CD8-positive, alpha-beta T cell (primary cell): ENCODE measurements at regions of chr3 and their contacts with region 1.

Region 1: DNA sequence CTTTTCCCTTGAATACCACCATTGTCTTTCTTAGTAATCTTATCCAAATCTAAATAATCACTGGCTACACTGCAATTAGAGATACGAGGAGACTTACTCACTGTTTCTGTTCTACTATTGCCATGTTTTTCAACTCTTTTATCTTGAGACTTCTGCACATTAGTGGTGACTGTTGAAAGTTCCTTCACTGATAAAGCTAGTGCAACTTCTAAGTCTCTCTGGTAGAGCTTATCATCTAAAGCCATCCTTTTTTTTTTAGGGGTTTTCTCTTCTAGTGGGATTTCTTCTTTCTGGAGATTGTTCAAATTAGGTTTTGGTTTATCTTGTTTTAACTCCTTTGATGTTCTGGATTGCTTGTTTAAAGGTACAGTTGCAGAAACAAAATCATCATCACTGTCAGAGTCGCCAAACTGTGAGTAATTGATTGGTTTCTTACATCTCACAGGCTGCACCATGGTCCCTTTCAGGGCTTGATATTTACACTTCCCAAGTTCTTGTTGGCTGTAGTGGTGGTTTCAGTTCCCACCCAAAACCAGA is 37.7 kb downstream of the NCK1 start:
- DNase-seq: peak in 2 of 9 experiments; percentile 18 to 53
- ATAC-seq: peak; percentile 31
- H3K4me3 ChIP-seq: no peak overlapping the region
- H3K4me3 Mint-ChIP-seq: peak overlapping the region; percentile 21
- H3K27ac ChIP-seq: peak overlapping the region in 1 of 2 experiments; percentile 48
- H3K27ac Mint-ChIP-seq: peak overlapping the region; percentile 78
- H3K4me1 ChIP-seq: peaks cover 19% of the 10 kb centered on the region
- H3K4me1 Mint-ChIP-seq: peaks cover 66% of the 10 kb centered on the region
- H3K27me3 ChIP-seq: no peaks in the 10 kb centered on the region
- H3K27me3 Mint-ChIP-seq: no peaks in the 10 kb centered on the region
- CTCF ChIP-seq: no peak

Region 2: GRCh38 chr3:136838641-136839555 is 60.8 kb before region 1 on chr3:
- CTCF ChIA-PET with region 1: no interaction called
- POLR2A ChIA-PET with region 1: no interaction called
- intact Hi-C with region 1: no loop called
- DNase-seq: no peak
- ATAC-seq: no peak
- H3K4me3 ChIP-seq: no peak overlapping the region
- H3K4me3 Mint-ChIP-seq: no peak overlapping the region
- H3K27ac ChIP-seq: no peak overlapping the region
- H3K27ac Mint-ChIP-seq: no peak overlapping the region
- H3K4me1 ChIP-seq: no peaks in the 10 kb centered on the region
- H3K4me1 Mint-ChIP-seq: peaks cover 3% of the 10 kb centered on the region
- H3K27me3 ChIP-seq: no peaks in the 10 kb centered on the region
- H3K27me3 Mint-ChIP-seq: no peaks in the 10 kb centered on the region
- CTCF ChIP-seq: no peak

Region 3: GRCh38 chr3:136914739-136915138 is 15.0 kb after region 1 on chr3:
- CTCF ChIA-PET with region 1: no interaction called
- POLR2A ChIA-PET with region 1: no interaction called
- intact Hi-C with region 1: loop called in 1 of 2 experiments (anchors 2 kb)
- DNase-seq: no peak
- ATAC-seq: no peak
- H3K4me3 ChIP-seq: no peak overlapping the region
- H3K4me3 Mint-ChIP-seq: no peak overlapping the region
- H3K27ac ChIP-seq: no peak overlapping the region
- H3K27ac Mint-ChIP-seq: peak overlapping the region; percentile 25
- H3K4me1 ChIP-seq: peaks cover 57% of the 10 kb centered on the region
- H3K4me1 Mint-ChIP-seq: peaks cover 91% of the 10 kb centered on the region
- H3K27me3 ChIP-seq: no peaks in the 10 kb centered on the region
- H3K27me3 Mint-ChIP-seq: no peaks in the 10 kb centered on the region
- CTCF ChIP-seq: no peak

Region 4: GRCh38 chr3:136929984-136930670 is 30.4 kb after region 1 on chr3:
- CTCF ChIA-PET with region 1: no interaction called
- POLR2A ChIA-PET with region 1: no interaction called
- intact Hi-C with region 1: loop called in 1 of 2 experiments (anchors 5 kb)
- DNase-seq: no peak
- ATAC-seq: no peak
- H3K4me3 ChIP-seq: no peak overlapping the region
- H3K4me3 Mint-ChIP-seq: no peak overlapping the region
- H3K27ac ChIP-seq: no peak overlapping the region
- H3K27ac Mint-ChIP-seq: no peak overlapping the region
- H3K4me1 ChIP-seq: peaks cover 4% of the 10 kb centered on the region
- H3K4me1 Mint-ChIP-seq: peaks cover 74% of the 10 kb centered on the region
- H3K27me3 ChIP-seq: no peaks in the 10 kb centered on the region
- H3K27me3 Mint-ChIP-seq: no peaks in the 10 kb centered on the region
- CTCF ChIP-seq: no peak